K562 (cell line): ENCODE measurements at regions of chr13 and their contacts with region 1.

Region 1: GRCh38 chr13:110509971-110510786 is 51.3 kb downstream of the RAB20 start:
- DNase-seq: peak; percentile 36 to 74 (median 52)
- ATAC-seq: peak; percentile 73
- H3K4me3 ChIP-seq: no peak overlapping the region
- H3K27ac ChIP-seq: peak overlapping the region; percentile 87
- H3K4me1 ChIP-seq: peaks cover 53 to 63% of the 10 kb centered on the region in 2 experiments
- H3K27me3 ChIP-seq: no peaks in the 10 kb centered on the region
- CTCF ChIP-seq: no peak
- EP300 ChIP-seq: peak; percentile 54; the same call in 1 of the 2 replicates
- POLR2A ChIP-seq: no peak
- RAD21 ChIP-seq: no peak

Region 2: GRCh38 chr13:110561344-110562035 is 51.3 kb after region 1 on chr13 and contains the start of gene RAB20:
- CTCF ChIA-PET with region 1: no interaction called
- POLR2A ChIA-PET with region 1: no interaction called
- in situ Hi-C with region 1: no loop called
- intact Hi-C with region 1: loop called (anchors 5 kb)
- DNase-seq: peak; percentile 78 to 91 (median 88)
- ATAC-seq: peak; percentile 83
- H3K4me3 ChIP-seq: peak within 1 kb of the TSS; percentile 70
- H3K27ac ChIP-seq: peak within 1 kb of the TSS; percentile 73
- H3K4me1 ChIP-seq: peaks cover 19 to 31% of the 10 kb centered on the region in 2 experiments; a peak in 4 of 5 replicates
- H3K27me3 ChIP-seq: no peaks in the 10 kb centered on the region
- CTCF ChIP-seq: no peak
- EP300 ChIP-seq: no peak
- POLR2A ChIP-seq: 0 out of 2 replicates have a peak, but pooled peaks have one; percentile 34
- RAD21 ChIP-seq: no peak
- polyA plus RNA-seq, gene RAB20: 0.62 to 0.82 TPM

Region 3: GRCh38 chr13:110575322-110576069 is 65.3 kb after region 1 on chr13:
- CTCF ChIA-PET with region 1: no interaction called
- POLR2A ChIA-PET with region 1: interaction called, 3 read pairs
- in situ Hi-C with region 1: no loop called
- intact Hi-C with region 1: loop called (anchors 5 kb)
- DNase-seq: peak; percentile 27 to 54 (median 36)
- ATAC-seq: peak; percentile 77
- H3K4me3 ChIP-seq: no peak overlapping the region
- H3K27ac ChIP-seq: 0 out of 3 replicates have a peak overlapping the region, but pooled peaks have one; percentile 19
- H3K4me1 ChIP-seq: peaks cover 21% of the 10 kb centered on the region in 2 experiments; a peak in 4 of 5 replicates
- H3K27me3 ChIP-seq: no peaks in the 10 kb centered on the region; a peak in 1 of 5 replicates
- CTCF ChIP-seq: peak in 2 of 3 experiments; percentile 13 to 34; a peak in 2 of 6 replicates
- EP300 ChIP-seq: no peak
- POLR2A ChIP-seq: no peak
- RAD21 ChIP-seq: peak; percentile 35 to 37

Region 4: GRCh38 chr13:110648146-110648819 is 138.1 kb after region 1 on chr13:
- CTCF ChIA-PET with region 1: no interaction called
- POLR2A ChIA-PET with region 1: no interaction called
- in situ Hi-C with region 1: no loop called
- intact Hi-C with region 1: no loop called
- DNase-seq: peak in 2 of 4 experiments; percentile 19 to 22
- ATAC-seq: peak; percentile 50
- H3K4me3 ChIP-seq: no peak overlapping the region
- H3K27ac ChIP-seq: no peak overlapping the region
- H3K4me1 ChIP-seq: peaks cover 4 to 23% of the 10 kb centered on the region in 2 experiments; a peak in 4 of 5 replicates
- H3K27me3 ChIP-seq: no peaks in the 10 kb centered on the region
- CTCF ChIP-seq: no peak
- EP300 ChIP-seq: no peak
- POLR2A ChIP-seq: no peak
- RAD21 ChIP-seq: no peak